GM12878 (cell line): ENCODE measurements at regions of chr3 and their contacts with region 1.

Region 1: GRCh38 chr3:38479431-38480092 is 16.6 kb upstream of the EXOG start:
- DNase-seq: no peak
- ATAC-seq: peak; percentile 97
- H3K4me3 ChIP-seq: no peak overlapping the region
- H3K27ac ChIP-seq: no peak overlapping the region
- H3K4me1 ChIP-seq: no peaks in the 10 kb centered on the region
- H3K27me3 ChIP-seq: no peaks in the 10 kb centered on the region
- CTCF ChIP-seq: peak; percentile 72 to 90 (median 89)
- EP300 ChIP-seq: no peak
- POLR2A ChIP-seq: no peak
- RAD21 ChIP-seq: peak; percentile 92

Region 2: GRCh38 chr3:37680401-37680800 is 799.2 kb before region 1 on chr3:
- CTCF ChIA-PET with region 1: no interaction called
- POLR2A ChIA-PET with region 1: no interaction called
- RAD21 ChIA-PET with region 1: no interaction called
- SMC1A ChIA-PET with region 1: no interaction called
- in situ Hi-C with region 1: no loop called
- intact Hi-C with region 1: no loop called
- DNase-seq: no peak
- ATAC-seq: no peak
- H3K4me3 ChIP-seq: no peak overlapping the region
- H3K27ac ChIP-seq: no peak overlapping the region
- H3K4me1 ChIP-seq: no peaks in the 10 kb centered on the region
- H3K27me3 ChIP-seq: peaks cover 0 to 2% of the 10 kb centered on the region in 2 experiments; a peak in 3 of 4 replicates
- CTCF ChIP-seq: no peak
- EP300 ChIP-seq: no peak
- POLR2A ChIP-seq: no peak
- RAD21 ChIP-seq: no peak

Region 3: DNA sequence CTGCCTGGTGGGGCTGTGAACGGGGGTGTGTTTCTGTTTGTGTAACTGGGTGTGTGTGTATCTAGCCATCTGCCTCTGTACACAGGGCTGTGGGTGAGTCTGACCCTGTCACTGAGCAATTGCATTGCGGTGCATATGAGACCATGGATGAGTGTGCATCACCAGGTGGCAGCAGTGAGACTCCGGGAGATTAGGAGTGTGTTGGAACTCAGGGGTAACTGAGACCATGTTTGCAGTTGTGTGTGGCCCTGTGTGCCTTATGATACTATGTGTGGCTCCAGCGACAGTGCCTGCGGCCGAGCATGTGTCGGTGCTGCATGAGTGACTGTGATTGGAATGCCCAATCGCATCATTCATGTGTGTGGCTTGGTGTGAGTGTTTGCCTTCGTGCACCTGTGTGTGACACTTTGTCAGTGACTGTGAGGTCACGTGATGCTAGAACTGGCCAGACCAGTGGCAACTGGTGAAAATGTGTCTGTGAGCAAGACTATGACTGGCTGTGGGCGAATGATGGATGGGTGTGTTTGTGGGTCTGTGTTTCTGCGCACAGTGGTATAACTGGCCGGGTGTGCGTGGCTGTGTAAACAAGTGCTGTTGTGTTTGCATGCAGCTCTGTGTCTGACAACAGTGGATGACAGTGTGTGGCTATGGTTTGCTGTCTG is 475.0 kb before region 1 on chr3:
- CTCF ChIA-PET with region 1: no interaction called
- POLR2A ChIA-PET with region 1: no interaction called
- RAD21 ChIA-PET with region 1: no interaction called
- SMC1A ChIA-PET with region 1: no interaction called
- in situ Hi-C with region 1: no loop called
- intact Hi-C with region 1: loop called (anchors 1 kb)
- DNase-seq: no peak
- ATAC-seq: peak; percentile 85
- H3K4me3 ChIP-seq: no peak overlapping the region
- H3K27ac ChIP-seq: no peak overlapping the region
- H3K4me1 ChIP-seq: no peaks in the 10 kb centered on the region; the same call in 1 of the 2 replicates
- H3K27me3 ChIP-seq: no peaks in the 10 kb centered on the region
- CTCF ChIP-seq: peak; percentile 68 to 76 (median 73)
- EP300 ChIP-seq: no peak
- POLR2A ChIP-seq: no peak
- RAD21 ChIP-seq: peak; percentile 39; the same call in 1 of the 2 replicates

Region 4: DNA sequence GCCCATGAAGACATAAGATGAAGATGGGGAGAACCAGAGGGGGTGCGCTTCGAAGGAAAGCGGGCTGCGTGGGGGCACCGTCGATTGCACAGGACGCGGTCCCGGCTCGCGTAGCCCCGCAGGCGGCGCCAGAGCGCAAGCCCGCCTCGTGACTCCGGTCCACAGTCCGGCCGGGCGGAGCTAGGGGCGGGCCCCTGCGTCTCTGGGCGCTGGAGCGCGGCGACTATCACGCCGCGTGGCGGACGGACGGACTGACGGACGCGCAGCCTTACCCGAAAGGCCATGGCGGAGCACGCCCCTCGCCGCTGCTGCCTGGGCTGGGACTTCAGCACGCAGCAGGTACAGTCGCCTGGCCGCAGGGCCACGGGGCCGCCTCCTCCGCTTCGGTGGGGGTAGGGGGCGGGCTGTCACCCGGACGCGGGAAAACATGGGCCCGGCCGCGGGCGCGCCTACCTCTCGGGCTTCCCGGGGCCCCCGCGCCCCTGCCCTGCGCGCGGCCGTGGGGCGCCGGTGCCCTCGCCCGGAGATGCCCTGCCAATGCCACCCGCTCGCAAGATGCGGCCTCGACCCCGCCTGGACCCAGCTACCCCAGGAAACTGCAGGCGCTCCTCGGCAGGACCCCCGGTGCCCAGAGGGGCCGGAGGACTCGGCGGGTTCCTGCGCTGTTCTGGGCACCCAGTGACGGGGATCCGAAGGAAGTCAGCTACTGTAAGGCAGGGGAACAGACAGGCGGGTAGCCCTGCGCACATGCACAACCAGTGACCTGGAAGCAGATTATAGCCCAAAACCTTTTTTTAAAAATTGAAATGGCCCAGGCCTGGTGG is 132.8 kb before region 1 on chr3 and contains the start of gene XYLB:
- CTCF ChIA-PET with region 1: interaction called, 55 read pairs
- POLR2A ChIA-PET with region 1: no interaction called
- RAD21 ChIA-PET with region 1: interaction called, 18 read pairs
- SMC1A ChIA-PET with region 1: interaction called, 30 read pairs
- in situ Hi-C with region 1: loop called (anchors 5 kb)
- intact Hi-C with region 1: loop called (anchors 1 kb)
- DNase-seq: peak; percentile 44
- ATAC-seq: peak; percentile 98
- H3K4me3 ChIP-seq: peak within 1 kb of the TSS; percentile 86
- H3K27ac ChIP-seq: peak within 1 kb of the TSS; percentile 42
- H3K4me1 ChIP-seq: no peaks in the 10 kb centered on the region; the same call in 1 of the 2 replicates
- H3K27me3 ChIP-seq: no peaks in the 10 kb centered on the region
- CTCF ChIP-seq: peak; percentile 84 to 89 (median 88)
- EP300 ChIP-seq: peak in 1 of 2 experiments; percentile 58; a peak in 1 of 4 replicates
- POLR2A ChIP-seq: peak; percentile 79
- RAD21 ChIP-seq: peak; percentile 53
- polyA plus RNA-seq, gene XYLB: 0.60 to 0.80 TPM

Region 5: DNA sequence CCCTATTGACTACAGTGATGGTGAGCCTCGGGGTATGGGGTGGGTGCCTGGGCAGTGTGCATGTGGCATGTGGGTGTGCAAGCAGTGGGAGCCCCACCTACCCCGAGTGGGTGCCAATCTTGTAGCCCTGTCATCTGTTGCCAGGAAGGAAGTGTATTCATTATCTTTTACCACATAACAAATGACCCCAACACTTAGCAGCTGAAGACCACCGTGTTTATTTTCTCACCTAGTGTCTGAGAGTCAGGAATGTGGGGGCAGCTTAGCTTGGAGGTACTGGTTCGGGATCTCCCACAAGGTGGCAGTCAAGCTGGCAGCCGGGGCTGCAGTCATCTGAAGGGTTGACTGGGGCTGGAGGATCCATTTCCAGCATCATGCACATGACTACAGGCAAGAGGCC is 111.3 kb before region 1 on chr3:
- CTCF ChIA-PET with region 1: no interaction called
- POLR2A ChIA-PET with region 1: no interaction called
- RAD21 ChIA-PET with region 1: no interaction called
- SMC1A ChIA-PET with region 1: no interaction called
- in situ Hi-C with region 1: no loop called
- intact Hi-C with region 1: loop called (anchors 5 kb)
- DNase-seq: no peak
- ATAC-seq: no peak
- H3K4me3 ChIP-seq: no peak overlapping the region
- H3K27ac ChIP-seq: no peak overlapping the region
- H3K4me1 ChIP-seq: no peaks in the 10 kb centered on the region
- H3K27me3 ChIP-seq: no peaks in the 10 kb centered on the region
- CTCF ChIP-seq: no peak
- EP300 ChIP-seq: no peak
- POLR2A ChIP-seq: no peak
- RAD21 ChIP-seq: no peak

Region 6: GRCh38 chr3:38468782-38469181 is 10.8 kb before region 1 on chr3:
- CTCF ChIA-PET with region 1: interaction called, 21 read pairs
- POLR2A ChIA-PET with region 1: no interaction called
- RAD21 ChIA-PET with region 1: no interaction called
- SMC1A ChIA-PET with region 1: no interaction called
- in situ Hi-C with region 1: no loop called
- intact Hi-C with region 1: no loop called
- DNase-seq: no peak
- ATAC-seq: no peak
- H3K4me3 ChIP-seq: no peak overlapping the region
- H3K27ac ChIP-seq: no peak overlapping the region
- H3K4me1 ChIP-seq: no peaks in the 10 kb centered on the region
- H3K27me3 ChIP-seq: no peaks in the 10 kb centered on the region
- CTCF ChIP-seq: no peak
- EP300 ChIP-seq: no peak
- POLR2A ChIP-seq: no peak
- RAD21 ChIP-seq: no peak